Transverse colon (tissue), 4 donors: ENCODE measurements at regions of chr1 and their contacts with region 1.

Region 1: DNA sequence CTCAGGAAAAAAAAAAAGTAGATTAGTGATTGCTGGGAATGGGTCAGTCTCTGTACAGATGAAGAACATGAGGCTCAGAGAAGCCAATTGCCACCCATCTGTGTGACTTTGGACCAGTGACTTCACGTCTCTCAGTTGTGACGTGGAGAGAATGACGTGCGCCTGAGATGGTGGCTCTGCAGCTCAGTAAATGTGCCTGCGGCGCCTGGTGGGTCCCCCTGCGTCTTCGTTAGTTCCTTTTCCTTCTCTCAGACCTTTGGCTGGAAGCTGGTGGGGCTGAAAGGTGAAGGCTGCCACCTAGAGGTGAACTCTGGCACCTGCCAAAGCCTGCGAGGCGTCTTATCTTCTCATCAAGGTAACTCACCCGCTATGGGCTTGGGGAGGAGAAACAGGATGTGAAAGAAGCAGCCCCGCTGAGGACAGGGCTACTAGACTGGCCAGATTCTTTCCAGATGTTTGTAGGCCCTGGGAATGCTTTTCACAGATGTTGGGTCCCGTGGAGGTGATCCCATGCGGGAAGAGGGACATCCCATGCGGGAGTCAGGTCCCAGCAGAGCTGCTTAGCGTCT is 8.7 kb upstream of the E2F2 start:
- DNase-seq: peak; percentile 95
- H3K4me3 ChIP-seq: no peak overlapping the region
- H3K27ac ChIP-seq: peak overlapping the region in 3 of 4 donors; percentile 28 to 38 (median 38)
- H3K4me1 ChIP-seq: peaks cover 0 to 14% (median 8%) of the 10 kb centered on the region in 4 donors
- H3K27me3 ChIP-seq: no peaks in the 10 kb centered on the region
- CTCF ChIP-seq: peak; percentile 88 to 97 (median 94)
- EP300 ChIP-seq: no peak
- POLR2A ChIP-seq: no peak

Region 2: DNA sequence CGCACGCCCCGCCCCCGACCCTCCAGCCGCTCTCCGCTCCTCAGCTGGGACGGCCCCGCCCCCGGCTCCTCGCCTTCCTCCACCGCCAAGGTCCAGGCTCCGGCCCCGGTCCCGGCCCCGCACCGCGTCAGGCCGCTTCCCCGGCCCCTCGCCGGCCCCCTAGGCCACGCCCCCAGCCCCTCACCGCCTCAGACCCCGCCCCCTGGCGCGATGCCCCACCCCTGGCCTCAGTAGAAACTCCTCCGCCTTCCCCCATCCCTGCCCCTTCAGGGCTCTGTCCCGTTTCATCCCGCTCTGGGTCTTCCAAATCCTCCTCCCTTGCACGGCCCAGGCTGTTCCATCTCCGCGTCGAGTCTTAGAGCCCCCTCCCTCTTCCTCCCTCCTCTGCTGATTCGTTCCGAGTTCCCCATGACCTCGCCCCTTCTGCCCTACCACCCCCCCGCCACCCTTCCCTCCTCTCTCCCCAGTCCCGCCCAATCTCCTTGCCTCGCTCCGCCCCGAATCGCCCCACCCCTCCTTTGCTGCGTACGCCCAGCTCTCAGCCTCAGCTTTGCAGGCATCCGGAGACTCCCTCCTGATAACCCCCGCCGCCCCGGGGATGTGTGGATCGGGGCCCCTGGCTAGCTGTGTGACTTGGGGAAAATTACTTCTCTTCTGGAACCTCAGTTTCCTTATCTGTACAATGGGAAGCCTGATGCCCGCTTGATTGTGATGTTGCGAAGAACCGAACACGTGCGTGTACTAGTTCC is 55.4 kb before region 1 on chr1:
- in situ Hi-C with region 1: loop called in 2 of 4 experiments (anchors 5 to 10 kb)
- intact Hi-C with region 1: no loop called
- DNase-seq: peak; percentile 95
- H3K4me3 ChIP-seq: peak overlapping the region; percentile 33 to 92 (median 80)
- H3K27ac ChIP-seq: peak overlapping the region; percentile 89 to 95 (median 93)
- H3K4me1 ChIP-seq: peaks cover 0 to 20% (median 16%) of the 10 kb centered on the region in 4 donors
- H3K27me3 ChIP-seq: no peaks in the 10 kb centered on the region
- CTCF ChIP-seq: no peak
- EP300 ChIP-seq: no peak
- POLR2A ChIP-seq: peak; percentile 28

Region 3: GRCh38 chr1:23496490-23497181 is 43.1 kb before region 1 on chr1:
- in situ Hi-C with region 1: loop called in 2 of 4 experiments (anchors 5 kb)
- intact Hi-C with region 1: loop called (anchors 2 kb)
- DNase-seq: no peak
- H3K4me3 ChIP-seq: no peak overlapping the region
- H3K27ac ChIP-seq: no peak overlapping the region
- H3K4me1 ChIP-seq: peaks cover 0 to 15% (median 2%) of the 10 kb centered on the region in 4 donors
- H3K27me3 ChIP-seq: no peaks in the 10 kb centered on the region
- CTCF ChIP-seq: no peak
- EP300 ChIP-seq: no peak
- POLR2A ChIP-seq: no peak

Region 4: GRCh38 chr1:23634842-23635651 is 95.3 kb after region 1 on chr1:
- in situ Hi-C with region 1: loop called in 2 of 4 experiments (anchors 5 kb)
- intact Hi-C with region 1: loop called (anchors 2 kb)
- DNase-seq: peak; percentile 69
- H3K4me3 ChIP-seq: peak overlapping the region in 3 of 4 donors; percentile 22 to 41 (median 24)
- H3K27ac ChIP-seq: peak overlapping the region; percentile 68 to 73 (median 70)
- H3K4me1 ChIP-seq: peaks cover 0 to 11% (median 8%) of the 10 kb centered on the region in 4 donors
- H3K27me3 ChIP-seq: no peaks in the 10 kb centered on the region
- CTCF ChIP-seq: peak; percentile 87 to 95 (median 92)
- EP300 ChIP-seq: no peak
- POLR2A ChIP-seq: no peak